Activated CD4-positive, alpha-beta T cell treated with anti-CD3 and anti-CD28 coated beads, Interleukin-2, amount 10 ng/mL, durations not matched to agents 24 days and 14 days (primary cell): ENCODE measurements at regions of chr20 and their contacts with region 1.

Region 1: DNA sequence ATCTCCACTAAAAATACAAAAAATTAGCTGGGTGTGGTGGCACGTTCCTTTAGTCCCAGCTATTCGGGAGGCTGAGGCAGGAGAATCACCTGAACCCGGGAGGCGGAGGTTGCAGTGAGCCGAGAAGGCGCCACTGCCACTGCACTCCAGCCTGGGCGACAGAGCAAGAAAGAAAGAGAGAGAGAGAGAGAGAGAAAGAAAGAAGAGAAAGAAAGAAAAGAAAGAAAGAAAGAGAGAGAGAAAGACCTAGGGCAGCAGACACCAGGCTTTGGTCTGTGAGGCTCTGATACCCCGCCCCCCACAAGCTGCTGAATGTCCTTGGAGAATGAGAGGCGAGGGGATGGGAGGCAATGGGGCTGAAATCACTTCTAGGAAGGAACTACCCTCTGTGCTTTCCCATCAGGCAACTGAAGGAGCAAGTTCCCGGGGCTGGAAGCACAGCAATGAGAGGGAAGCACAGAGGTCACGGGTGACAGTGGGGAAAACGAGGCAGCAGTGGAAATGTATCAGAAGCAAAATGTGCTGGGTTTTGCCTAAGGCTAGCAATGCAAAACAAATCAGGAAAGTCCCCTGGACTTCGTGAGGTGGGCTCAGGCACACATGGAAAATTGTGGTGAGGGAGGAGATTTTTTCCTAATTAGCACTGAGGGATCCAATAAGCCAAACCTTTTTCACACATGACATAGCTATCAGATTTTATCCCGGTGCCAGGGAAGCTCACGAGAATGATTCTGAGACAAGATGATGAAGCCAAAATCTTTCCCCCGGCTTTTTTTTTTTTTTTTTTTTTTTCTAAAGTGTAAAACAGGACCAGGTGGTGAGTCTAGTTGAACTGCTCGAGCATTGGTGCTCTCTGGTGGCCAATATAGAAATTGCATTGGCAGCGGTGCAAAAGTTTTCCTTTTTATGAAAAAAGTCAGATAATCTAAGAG is 16.9 kb upstream of the ARFGEF2 start:
- DNase-seq: peak; percentile 91
- H3K4me3 Mint-ChIP-seq: no peak overlapping the region
- H3K27ac Mint-ChIP-seq: no peak overlapping the region
- H3K4me1 Mint-ChIP-seq: peaks cover 9% of the 10 kb centered on the region
- H3K27me3 Mint-ChIP-seq: peaks cover 4% of the 10 kb centered on the region

Region 2: GRCh38 chr20:47929363-47930123 is 975.1 kb before region 1 on chr20:
- intact Hi-C with region 1: no loop called
- DNase-seq: no peak
- H3K4me3 Mint-ChIP-seq: no peak overlapping the region
- H3K27ac Mint-ChIP-seq: no peak overlapping the region
- H3K4me1 Mint-ChIP-seq: no peaks in the 10 kb centered on the region
- H3K27me3 Mint-ChIP-seq: no peaks in the 10 kb centered on the region

Region 3: DNA sequence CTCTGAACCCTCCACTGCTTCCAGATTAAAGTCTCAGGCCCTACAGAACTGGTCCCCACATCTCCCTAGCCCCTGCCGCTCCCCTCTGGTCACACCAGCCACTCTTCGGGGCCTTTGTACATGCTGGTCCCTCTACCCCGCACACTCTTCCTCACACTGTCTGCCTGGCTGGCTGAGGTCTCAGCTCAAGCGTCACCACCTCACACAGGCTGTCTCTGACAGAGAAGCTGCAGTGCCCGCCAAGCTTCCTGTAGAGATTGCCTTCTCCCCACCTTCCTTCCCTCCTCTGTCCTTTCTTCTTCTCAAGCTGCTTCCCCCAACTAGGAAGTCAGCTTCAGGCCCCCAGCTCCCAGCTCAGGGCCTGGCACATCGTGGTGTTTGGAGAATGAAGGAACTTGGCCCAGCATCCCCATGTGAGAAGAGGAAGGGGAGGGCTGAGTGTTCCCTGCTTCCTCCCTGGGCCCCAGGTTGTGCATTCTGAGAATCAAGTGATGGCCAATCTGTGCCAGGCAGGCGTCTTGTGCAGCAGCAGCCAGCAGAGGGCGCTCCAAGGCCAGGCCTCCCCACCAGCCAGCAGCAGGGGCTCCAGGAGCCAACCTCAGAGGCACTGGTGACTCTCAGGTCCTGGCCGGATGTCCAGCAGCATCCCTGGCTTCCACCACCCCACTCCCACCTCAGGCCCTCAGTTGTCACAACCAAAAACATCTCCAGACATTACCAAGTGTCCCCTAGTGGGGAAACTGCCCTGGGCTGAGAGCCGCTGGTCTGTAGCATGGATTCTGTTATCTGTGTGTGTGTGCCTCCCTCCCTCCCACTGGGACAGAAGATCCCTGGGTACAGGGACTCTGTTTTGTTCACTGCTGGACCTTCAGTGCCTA is 269.0 kb before region 1 on chr20:
- intact Hi-C with region 1: loop called (anchors 2 kb)
- DNase-seq: peak; percentile 91
- H3K4me3 Mint-ChIP-seq: no peak overlapping the region
- H3K27ac Mint-ChIP-seq: peak overlapping the region; percentile 79
- H3K4me1 Mint-ChIP-seq: peaks cover 5% of the 10 kb centered on the region
- H3K27me3 Mint-ChIP-seq: no peaks in the 10 kb centered on the region

Region 4: GRCh38 chr20:48657475-48658470 is 246.9 kb before region 1 on chr20:
- intact Hi-C with region 1: loop called (anchors 1 kb)
- DNase-seq: peak; percentile 89
- H3K4me3 Mint-ChIP-seq: no peak overlapping the region
- H3K27ac Mint-ChIP-seq: no peak overlapping the region
- H3K4me1 Mint-ChIP-seq: peaks cover 13% of the 10 kb centered on the region
- H3K27me3 Mint-ChIP-seq: no peaks in the 10 kb centered on the region